Activated CD8-positive, alpha-beta T cell treated with anti-CD3 and anti-CD28 coated beads for 36 hours (primary cell): ENCODE measurements at regions of chr22 and their contacts with region 1.

Region 1: GRCh38 chr22:25777870-25778269 is 35.9 kb downstream of the MYO18B start:
- DNase-seq: peak; percentile 37
- ATAC-seq: no peak
- H3K4me3 Mint-ChIP-seq: no peak overlapping the region
- H3K27ac Mint-ChIP-seq: no peak overlapping the region
- H3K4me1 Mint-ChIP-seq: peaks cover 3% of the 10 kb centered on the region
- H3K27me3 Mint-ChIP-seq: peaks cover 5% of the 10 kb centered on the region
- CTCF ChIP-seq: no peak

Region 2: DNA sequence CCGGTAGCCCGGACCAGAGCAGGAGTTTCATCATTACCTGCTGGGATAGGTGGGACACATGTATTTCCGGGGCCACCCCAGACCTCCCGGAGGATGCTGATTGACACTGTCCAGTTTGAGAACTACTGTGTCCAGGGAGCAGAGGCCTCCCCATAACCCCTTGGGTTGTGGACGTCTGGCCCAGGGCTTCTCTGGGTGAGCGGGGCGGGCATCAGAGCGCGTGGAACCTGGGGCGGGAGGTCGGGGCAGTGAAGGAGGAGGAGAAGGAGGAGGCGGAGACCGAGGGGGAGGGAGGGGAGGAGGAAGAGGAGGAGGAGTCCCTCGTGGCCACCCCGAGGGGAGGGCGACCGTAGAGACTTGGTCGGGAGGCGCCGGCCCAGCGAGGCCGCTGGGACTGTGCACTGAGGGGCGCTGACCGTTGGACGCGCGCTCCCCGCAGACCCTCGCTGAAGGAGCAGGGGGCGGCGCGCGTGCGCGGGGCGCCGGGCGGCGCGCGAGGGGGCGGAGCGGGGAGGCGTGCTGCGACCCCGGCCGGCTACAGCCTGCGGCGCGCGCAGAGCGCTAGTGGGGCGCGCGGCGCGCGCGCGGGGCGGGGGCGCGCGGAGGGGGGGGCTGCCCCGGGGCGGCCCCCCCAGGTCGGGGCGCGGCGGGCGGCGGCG is 213.4 kb before region 1 on chr22 and contains the start of gene GRK3:
- CTCF ChIA-PET with region 1: interaction called, 5 read pairs
- POLR2A ChIA-PET with region 1: interaction called, 3 read pairs
- intact Hi-C with region 1: loop called (anchors 5 kb)
- DNase-seq: peak; percentile 81
- ATAC-seq: peak; percentile 75
- H3K4me3 Mint-ChIP-seq: peak within 1 kb of the TSS; percentile 95
- H3K27ac Mint-ChIP-seq: peak within 1 kb of the TSS; percentile 91
- H3K4me1 Mint-ChIP-seq: peaks cover 42% of the 10 kb centered on the region
- H3K27me3 Mint-ChIP-seq: peaks cover 2% of the 10 kb centered on the region
- CTCF ChIP-seq: no peak
- total RNA-seq, gene GRK3: 26.3 to 26.7 TPM

Region 3: GRCh38 chr22:25702040-25702439 is 75.8 kb before region 1 on chr22:
- CTCF ChIA-PET with region 1: interaction called, 15 read pairs
- POLR2A ChIA-PET with region 1: no interaction called
- intact Hi-C with region 1: loop called (anchors 10 kb)
- DNase-seq: no peak
- ATAC-seq: no peak
- H3K4me3 Mint-ChIP-seq: no peak overlapping the region
- H3K27ac Mint-ChIP-seq: no peak overlapping the region
- H3K4me1 Mint-ChIP-seq: peaks cover 15% of the 10 kb centered on the region
- H3K27me3 Mint-ChIP-seq: no peaks in the 10 kb centered on the region
- CTCF ChIP-seq: peak; percentile 38

Region 4: DNA sequence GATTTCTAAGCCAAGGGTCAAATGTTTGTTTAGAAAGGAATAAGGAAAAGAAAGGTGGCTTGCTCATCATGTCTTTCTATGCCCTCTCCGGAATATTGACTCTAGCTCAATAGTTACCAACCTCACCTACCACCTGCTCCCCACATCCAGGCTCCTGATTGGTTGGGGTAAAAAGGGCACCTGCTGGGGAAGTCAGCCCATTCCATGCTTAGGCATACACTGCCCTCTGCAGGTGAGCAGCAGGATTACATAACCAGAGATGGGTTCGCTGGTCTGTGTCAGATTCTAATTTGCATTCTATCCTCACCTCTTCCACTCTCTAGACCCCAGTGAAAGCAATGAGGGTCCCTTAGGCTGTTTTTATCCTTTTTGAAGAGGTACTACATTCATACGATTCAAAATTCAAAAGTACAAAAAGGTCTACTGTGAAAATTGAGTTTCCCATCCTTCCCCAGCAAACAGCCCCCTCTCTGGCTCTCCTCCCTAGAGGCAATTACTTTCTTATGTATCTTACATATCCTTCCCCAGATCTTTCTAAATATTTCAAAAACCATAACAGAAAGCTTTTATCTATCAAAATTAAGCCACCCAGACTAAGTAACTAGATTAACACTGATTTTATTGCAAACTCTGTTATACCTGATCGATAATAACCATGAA is 553.2 kb after region 1 on chr22:
- CTCF ChIA-PET with region 1: interaction called, 3 read pairs
- POLR2A ChIA-PET with region 1: no interaction called
- intact Hi-C with region 1: loop called (anchors 5 kb)
- DNase-seq: peak; percentile 71
- ATAC-seq: peak; percentile 79
- H3K4me3 Mint-ChIP-seq: no peak overlapping the region
- H3K27ac Mint-ChIP-seq: no peak overlapping the region
- H3K4me1 Mint-ChIP-seq: no peaks in the 10 kb centered on the region
- H3K27me3 Mint-ChIP-seq: peaks cover 20% of the 10 kb centered on the region
- CTCF ChIP-seq: peak; percentile 95